Activated T-helper 1 cell treated with anti-CD3 and anti-CD28 coated beads, Interleukin-12 subunit alpha, Interleukin-12 subunit beta, Interleukin-2, Interleukin-4 antibody, amounts not matched to agents 30 ng/mL and 10 ng/mL and 1 ng/mL, durations not matched to agents 14 hours and 24 hours and 36 hours (primary cell): ENCODE measurements at regions of chr7 and their contacts with region 1.

Region 1: GRCh38 chr7:56074371-56074791 is 10.3 kb downstream of the SUMF2 start:
- DNase-seq: peak; percentile 59
- H3K4me3 Mint-ChIP-seq: no peak overlapping the region
- H3K27ac Mint-ChIP-seq: peak overlapping the region; percentile 24
- H3K4me1 Mint-ChIP-seq: peaks cover 5% of the 10 kb centered on the region
- H3K27me3 Mint-ChIP-seq: no peaks in the 10 kb centered on the region

Region 2: GRCh38 chr7:56009695-56010094 is 64.7 kb before region 1 on chr7:
- intact Hi-C with region 1: loop called (anchors 1 kb)
- DNase-seq: no peak
- H3K4me3 Mint-ChIP-seq: no peak overlapping the region
- H3K27ac Mint-ChIP-seq: no peak overlapping the region
- H3K4me1 Mint-ChIP-seq: no peaks in the 10 kb centered on the region
- H3K27me3 Mint-ChIP-seq: no peaks in the 10 kb centered on the region

Region 3: GRCh38 chr7:56033671-56034432 is 40.5 kb before region 1 on chr7:
- intact Hi-C with region 1: loop called (anchors 1 kb)
- DNase-seq: peak; percentile 71
- H3K4me3 Mint-ChIP-seq: peak overlapping the region; percentile 92
- H3K27ac Mint-ChIP-seq: peak overlapping the region; percentile 87
- H3K4me1 Mint-ChIP-seq: peaks cover 15% of the 10 kb centered on the region
- H3K27me3 Mint-ChIP-seq: no peaks in the 10 kb centered on the region

Region 4: GRCh38 chr7:56046721-56047445 is 27.5 kb before region 1 on chr7:
- intact Hi-C with region 1: no loop called
- DNase-seq: no peak
- H3K4me3 Mint-ChIP-seq: no peak overlapping the region
- H3K27ac Mint-ChIP-seq: no peak overlapping the region
- H3K4me1 Mint-ChIP-seq: peaks cover 9% of the 10 kb centered on the region
- H3K27me3 Mint-ChIP-seq: no peaks in the 10 kb centered on the region

Region 5: DNA sequence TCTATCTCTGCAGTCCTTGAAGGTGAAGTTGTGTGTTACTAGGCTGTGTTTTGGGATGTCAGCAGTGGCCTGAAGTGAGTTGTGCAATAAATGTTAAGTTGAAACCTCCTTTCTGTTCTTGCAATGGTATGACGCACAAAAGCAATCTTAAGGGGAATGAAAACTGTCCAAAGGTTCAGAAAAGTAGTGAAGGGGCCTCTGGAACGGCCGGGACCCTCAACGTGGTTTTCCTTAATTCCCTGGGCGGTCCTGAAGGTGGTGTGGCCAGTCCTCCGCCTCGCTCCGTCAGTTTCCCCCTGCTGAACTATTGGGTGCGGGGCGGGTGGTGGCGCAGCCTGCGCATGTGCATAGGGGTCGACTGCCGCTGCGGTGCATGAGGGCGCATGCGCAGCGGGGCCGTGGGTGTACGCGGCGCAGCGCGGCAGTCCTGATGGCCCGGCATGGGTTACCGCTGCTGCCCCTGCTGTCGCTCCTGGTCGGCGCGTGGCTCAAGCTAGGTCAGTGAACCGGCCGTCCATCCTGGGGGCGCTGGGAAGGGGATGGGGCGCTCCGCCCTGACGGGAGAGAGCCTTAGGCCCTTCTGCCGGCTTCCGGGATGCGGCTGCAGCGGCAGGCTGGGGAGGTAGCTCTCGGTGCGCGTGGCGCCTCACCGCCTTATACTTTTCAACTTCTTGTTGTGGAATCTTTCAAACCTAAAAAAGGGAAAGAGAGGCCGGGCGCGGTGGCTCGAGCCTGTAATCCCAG is 10.3 kb before region 1 on chr7 and contains the start of gene SUMF2:
- intact Hi-C with region 1: loop called (anchors 1 kb)
- DNase-seq: peak; percentile 88
- H3K4me3 Mint-ChIP-seq: peak within 1 kb of the TSS; percentile 94
- H3K27ac Mint-ChIP-seq: peak within 1 kb of the TSS; percentile 87
- H3K4me1 Mint-ChIP-seq: peaks cover 46% of the 10 kb centered on the region
- H3K27me3 Mint-ChIP-seq: no peaks in the 10 kb centered on the region
- total RNA-seq, gene SUMF2: 157 and 166 TPM in 2 replicates